Endothelial cell of umbilical vein (primary cell): ENCODE measurements at regions of chr17 and their contacts with region 1.

Region 1: GRCh38 chr17:35540589-35541404 is 3.3 kb upstream of the SLFN12L start:
- DNase-seq: peak; percentile 85
- H3K4me3 ChIP-seq: peak overlapping the region in 2 of 3 experiments; percentile 1 to 38
- H3K27ac ChIP-seq: peak overlapping the region; percentile 52
- H3K4me1 ChIP-seq: peaks cover 44% of the 10 kb centered on the region
- H3K27me3 ChIP-seq: no peaks in the 10 kb centered on the region
- CTCF ChIP-seq: no peak
- POLR2A ChIP-seq: peak; percentile 31

Region 2: GRCh38 chr17:34784526-34784925 is 756.3 kb before region 1 on chr17:
- CTCF ChIA-PET with region 1: no interaction called
- POLR2A ChIA-PET with region 1: no interaction called
- dilution Hi-C with region 1: no loop called
- intact Hi-C with region 1: no loop called
- DNase-seq: no peak
- H3K4me3 ChIP-seq: no peak overlapping the region
- H3K27ac ChIP-seq: no peak overlapping the region
- H3K4me1 ChIP-seq: no peaks in the 10 kb centered on the region
- H3K27me3 ChIP-seq: no peaks in the 10 kb centered on the region
- CTCF ChIP-seq: no peak
- POLR2A ChIP-seq: no peak

Region 3: GRCh38 chr17:34980681-34981537 is 559.9 kb before region 1 on chr17:
- CTCF ChIA-PET with region 1: no interaction called
- POLR2A ChIA-PET with region 1: no interaction called
- dilution Hi-C with region 1: no loop called
- intact Hi-C with region 1: loop called (anchors 10 kb)
- DNase-seq: peak; percentile 80
- H3K4me3 ChIP-seq: peak overlapping the region; percentile 65 to 92 (median 89)
- H3K27ac ChIP-seq: peak overlapping the region; percentile 96
- H3K4me1 ChIP-seq: peaks cover 19% of the 10 kb centered on the region
- H3K27me3 ChIP-seq: no peaks in the 10 kb centered on the region
- CTCF ChIP-seq: peak in 1 of 2 donors; percentile 51
- POLR2A ChIP-seq: peak; percentile 80

Region 4: GRCh38 chr17:35170968-35171771 is 369.6 kb before region 1 on chr17:
- CTCF ChIA-PET with region 1: interaction called, 186 read pairs
- POLR2A ChIA-PET with region 1: no interaction called
- dilution Hi-C with region 1: no loop called
- intact Hi-C with region 1: loop called (anchors 1 kb)
- DNase-seq: peak; percentile 53
- H3K4me3 ChIP-seq: no peak overlapping the region
- H3K27ac ChIP-seq: no peak overlapping the region
- H3K4me1 ChIP-seq: no peaks in the 10 kb centered on the region
- H3K27me3 ChIP-seq: peaks cover 0 to 3% of the 10 kb centered on the region in 2 experiments
- CTCF ChIP-seq: no peak
- POLR2A ChIP-seq: no peak

Region 5: GRCh38 chr17:35312790-35313711 is 227.7 kb before region 1 on chr17:
- CTCF ChIA-PET with region 1: interaction called, 112 read pairs
- POLR2A ChIA-PET with region 1: no interaction called
- dilution Hi-C with region 1: loop called (anchors 25 kb)
- intact Hi-C with region 1: loop called (anchors 1 kb)
- DNase-seq: peak; percentile 71
- H3K4me3 ChIP-seq: no peak overlapping the region
- H3K27ac ChIP-seq: no peak overlapping the region
- H3K4me1 ChIP-seq: peaks cover 3% of the 10 kb centered on the region
- H3K27me3 ChIP-seq: no peaks in the 10 kb centered on the region
- CTCF ChIP-seq: peak; percentile 67
- POLR2A ChIP-seq: no peak

Region 6: DNA sequence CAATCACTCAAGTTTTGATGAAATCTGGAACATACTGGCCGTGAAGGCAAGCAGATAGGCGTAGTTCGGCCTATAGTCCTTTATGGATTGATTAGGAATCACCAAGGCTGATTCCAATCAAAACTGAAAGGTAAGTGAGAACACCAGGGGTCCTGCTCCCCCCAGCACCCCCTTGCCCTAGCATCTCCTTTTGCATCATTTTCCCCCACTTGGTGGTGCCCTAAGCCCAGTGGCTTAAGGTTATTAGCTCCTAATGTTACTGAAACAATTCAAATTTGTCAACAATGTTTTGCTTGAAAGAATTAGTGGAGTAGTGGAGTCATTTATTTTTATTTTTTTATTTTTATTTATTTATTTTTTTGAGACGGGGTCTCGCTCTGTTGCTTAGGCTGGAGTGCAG is 14.9 kb after region 1 on chr17:
- CTCF ChIA-PET with region 1: interaction called, 16 read pairs
- POLR2A ChIA-PET with region 1: no interaction called
- dilution Hi-C with region 1: no loop called
- intact Hi-C with region 1: no loop called
- DNase-seq: no peak
- H3K4me3 ChIP-seq: no peak overlapping the region
- H3K27ac ChIP-seq: no peak overlapping the region
- H3K4me1 ChIP-seq: no peaks in the 10 kb centered on the region
- H3K27me3 ChIP-seq: peaks cover 23 to 36% of the 10 kb centered on the region in 2 experiments
- CTCF ChIP-seq: peak; percentile 7 to 27
- POLR2A ChIP-seq: no peak

Region 7: GRCh38 chr17:35587074-35587971 is 46.5 kb after region 1 on chr17 and contains the start of gene AP2B1:
- CTCF ChIA-PET with region 1: interaction called, 6 read pairs
- POLR2A ChIA-PET with region 1: no interaction called
- dilution Hi-C with region 1: no loop called
- intact Hi-C with region 1: loop called (anchors 1 kb)
- DNase-seq: peak; percentile 99
- H3K4me3 ChIP-seq: peak within 1 kb of the TSS; percentile 54 to 84 (median 70)
- H3K27ac ChIP-seq: peak within 1 kb of the TSS; percentile 91
- H3K4me1 ChIP-seq: peaks cover 19% of the 10 kb centered on the region
- H3K27me3 ChIP-seq: peaks cover 4 to 6% of the 10 kb centered on the region in 2 experiments
- CTCF ChIP-seq: no peak
- POLR2A ChIP-seq: peak; percentile 81
- total RNA-seq, gene AP2B1: 198 and 200 TPM in 2 replicates